ENCODE measurements at regions of chr19 and their contacts with region 1.

Region 1: GRCh38 chr19:6516659-6517291 is 14.1 kb upstream of the TNFSF9 start:
- DNase-seq: peak; percentile 97
- ATAC-seq: peak; percentile 86
- H3K4me3 Mint-ChIP-seq: peak overlapping the region; percentile 79
- H3K27ac Mint-ChIP-seq: peak overlapping the region; percentile 92
- H3K4me1 Mint-ChIP-seq: peaks cover 34% of the 10 kb centered on the region
- H3K27me3 Mint-ChIP-seq: peaks cover 2% of the 10 kb centered on the region

Region 2: GRCh38 chr19:6476155-6476895 is 40.5 kb before region 1 on chr19:
- CTCF ChIA-PET with region 1: no interaction called
- POLR2A ChIA-PET with region 1: no interaction called
- intact Hi-C with region 1: loop called in 1 of 2 experiments (anchors 1 kb)
- DNase-seq: peak; percentile 84
- ATAC-seq: peak; percentile 88
- H3K4me3 Mint-ChIP-seq: no peak overlapping the region
- H3K27ac Mint-ChIP-seq: no peak overlapping the region
- H3K4me1 Mint-ChIP-seq: peaks cover 16% of the 10 kb centered on the region
- H3K27me3 Mint-ChIP-seq: no peaks in the 10 kb centered on the region

Region 3: GRCh38 chr19:6530386-6531161 is 13.8 kb after region 1 on chr19 and contains the start of gene TNFSF9:
- CTCF ChIA-PET with region 1: no interaction called
- POLR2A ChIA-PET with region 1: no interaction called
- intact Hi-C with region 1: loop called in 1 of 2 experiments (anchors 1 kb)
- DNase-seq: peak; percentile 90
- ATAC-seq: peak; percentile 73
- H3K4me3 Mint-ChIP-seq: peak within 1 kb of the TSS; percentile 77
- H3K27ac Mint-ChIP-seq: peak within 1 kb of the TSS; percentile 80
- H3K4me1 Mint-ChIP-seq: peaks cover 30% of the 10 kb centered on the region
- H3K27me3 Mint-ChIP-seq: peaks cover 36% of the 10 kb centered on the region
- total RNA-seq, gene TNFSF9: 0.49 to 0.57 TPM

Region 4: DNA sequence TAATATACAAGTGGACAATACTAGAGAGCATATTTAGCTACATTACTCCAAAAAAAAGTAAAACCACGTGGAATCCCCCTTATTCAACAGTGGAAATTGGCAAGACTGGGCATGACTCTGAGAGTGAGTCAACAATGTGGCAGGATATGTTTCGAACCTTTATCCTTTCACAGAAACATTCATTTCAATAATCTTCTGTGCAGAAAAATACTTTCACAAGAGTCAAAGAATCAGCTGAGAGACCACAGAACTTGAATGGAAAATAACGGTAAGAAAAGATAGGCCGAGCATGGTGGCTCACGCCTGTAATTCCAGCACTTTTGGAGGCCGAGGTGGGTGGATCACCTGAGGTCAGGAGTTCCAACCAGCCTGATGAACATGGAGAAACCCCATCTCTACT is 99.2 kb after region 1 on chr19:
- CTCF ChIA-PET with region 1: interaction called, 6 read pairs
- POLR2A ChIA-PET with region 1: no interaction called
- intact Hi-C with region 1: loop called (anchors 1 to 5 kb)
- DNase-seq: peak; percentile 53
- ATAC-seq: peak; percentile 88
- H3K4me3 Mint-ChIP-seq: no peak overlapping the region
- H3K27ac Mint-ChIP-seq: peak overlapping the region; percentile 29
- H3K4me1 Mint-ChIP-seq: peaks cover 29% of the 10 kb centered on the region
- H3K27me3 Mint-ChIP-seq: peaks cover 32% of the 10 kb centered on the region

Region 5: DNA sequence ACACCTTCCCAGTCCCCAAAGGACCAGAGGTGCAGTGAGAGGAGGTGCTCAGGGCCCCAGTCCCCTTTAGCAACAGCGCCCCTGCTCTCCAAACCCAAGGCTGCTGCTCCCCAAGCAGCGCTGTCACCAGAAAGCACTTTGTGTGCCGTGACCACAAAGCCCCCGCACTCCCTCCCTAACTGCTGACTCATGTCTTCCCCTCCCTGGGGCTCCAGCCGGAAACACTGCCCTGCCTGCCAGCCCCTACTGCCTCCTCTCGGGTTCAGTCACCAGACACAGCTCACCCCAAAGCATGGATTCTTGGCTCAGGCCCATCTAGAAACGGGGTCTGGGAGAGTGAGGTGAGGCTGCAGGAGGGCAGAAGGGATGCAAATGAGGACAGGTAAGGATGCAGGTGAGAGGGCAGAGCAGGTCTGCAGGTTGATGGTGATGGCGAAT is 158.1 kb after region 1 on chr19:
- CTCF ChIA-PET with region 1: interaction called, 3 read pairs
- POLR2A ChIA-PET with region 1: no interaction called
- intact Hi-C with region 1: loop called (anchors 2 to 5 kb)
- DNase-seq: peak; percentile 97
- ATAC-seq: peak; percentile 61
- H3K4me3 Mint-ChIP-seq: peak overlapping the region; percentile 57
- H3K27ac Mint-ChIP-seq: peak overlapping the region; percentile 93
- H3K4me1 Mint-ChIP-seq: peaks cover 75% of the 10 kb centered on the region
- H3K27me3 Mint-ChIP-seq: no peaks in the 10 kb centered on the region

Region 6: GRCh38 chr19:6801485-6802086 is 284.8 kb after region 1 on chr19:
- CTCF ChIA-PET with region 1: interaction called, 3 read pairs
- POLR2A ChIA-PET with region 1: no interaction called
- intact Hi-C with region 1: loop called in 1 of 2 experiments (anchors 1 kb)
- DNase-seq: peak; percentile 90
- ATAC-seq: peak; percentile 75
- H3K4me3 Mint-ChIP-seq: peak overlapping the region; percentile 82
- H3K27ac Mint-ChIP-seq: peak overlapping the region; percentile 98
- H3K4me1 Mint-ChIP-seq: peaks cover 72% of the 10 kb centered on the region
- H3K27me3 Mint-ChIP-seq: no peaks in the 10 kb centered on the region

Measured in activated CD4-positive, alpha-beta T cell treated with anti-CD3 and anti-CD28 coated beads for 36 hours (primary cell).